Panc1 (cell line): ENCODE measurements at regions of chr11 and their contacts with region 1.

Region 1: GRCh38 chr11:9187616-9188015 is 77.5 kb downstream of the DENND5A start:
- DNase-seq: no peak
- ATAC-seq: no peak
- H3K4me3 ChIP-seq: no peak overlapping the region
- H3K27ac ChIP-seq: no peak overlapping the region
- H3K4me1 ChIP-seq: no peaks in the 10 kb centered on the region
- H3K27me3 ChIP-seq: no peaks in the 10 kb centered on the region
- CTCF ChIP-seq: no peak

Region 2: GRCh38 chr11:9177438-9178091 is 10.1 kb before region 1 on chr11:
- CTCF ChIA-PET with region 1: no interaction called
- POLR2A ChIA-PET with region 1: interaction called, 13 read pairs
- in situ Hi-C with region 1: no loop called
- intact Hi-C with region 1: no loop called
- DNase-seq: no peak
- ATAC-seq: no peak
- H3K4me3 ChIP-seq: no peak overlapping the region
- H3K27ac ChIP-seq: no peak overlapping the region
- H3K4me1 ChIP-seq: no peaks in the 10 kb centered on the region
- H3K27me3 ChIP-seq: no peaks in the 10 kb centered on the region
- CTCF ChIP-seq: no peak